ENCODE measurements at regions of chr5 and their contacts with region 1.

Region 1: GRCh38 chr5:77129391-77129990 is 42.4 kb upstream of the ZBED3 start:
- DNase-seq: peak in 1 of 2 experiments; percentile 31
- H3K4me3 ChIP-seq: no peak overlapping the region
- H3K27ac ChIP-seq: no peak overlapping the region
- H3K4me1 ChIP-seq: peaks cover 7% of the 10 kb centered on the region; the same call in 1 of the 2 replicates
- H3K27me3 ChIP-seq: no peaks in the 10 kb centered on the region
- CTCF ChIP-seq: peak; percentile 46; the same call in 1 of the 2 replicates

Region 2: DNA sequence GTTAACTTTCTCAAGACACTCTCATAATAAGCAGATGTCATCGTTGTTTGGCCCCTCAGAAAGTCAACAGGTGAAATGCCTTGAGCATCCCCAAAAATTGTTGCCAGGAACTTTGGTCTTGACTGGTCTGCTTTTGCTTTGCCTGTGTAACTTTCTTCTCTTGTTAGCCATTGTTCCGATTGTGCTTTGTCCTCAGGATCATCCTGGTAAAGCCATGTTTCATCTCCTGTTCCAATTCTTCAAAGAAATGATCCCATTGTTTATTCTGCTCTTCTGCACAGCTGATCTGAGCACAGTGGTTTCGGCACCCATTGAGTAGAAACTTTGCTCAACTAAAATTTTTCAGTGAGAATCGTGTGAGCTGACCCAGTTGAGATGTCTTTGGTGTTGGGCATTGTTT is 34.3 kb before region 1 on chr5:
- CTCF ChIA-PET with region 1: no interaction called
- POLR2A ChIA-PET with region 1: no interaction called
- intact Hi-C with region 1: loop called (anchors 1 kb)
- DNase-seq: no peak
- H3K4me3 ChIP-seq: no peak overlapping the region
- H3K27ac ChIP-seq: no peak overlapping the region
- H3K4me1 ChIP-seq: no peaks in the 10 kb centered on the region
- H3K27me3 ChIP-seq: no peaks in the 10 kb centered on the region
- CTCF ChIP-seq: no peak

Region 3: DNA sequence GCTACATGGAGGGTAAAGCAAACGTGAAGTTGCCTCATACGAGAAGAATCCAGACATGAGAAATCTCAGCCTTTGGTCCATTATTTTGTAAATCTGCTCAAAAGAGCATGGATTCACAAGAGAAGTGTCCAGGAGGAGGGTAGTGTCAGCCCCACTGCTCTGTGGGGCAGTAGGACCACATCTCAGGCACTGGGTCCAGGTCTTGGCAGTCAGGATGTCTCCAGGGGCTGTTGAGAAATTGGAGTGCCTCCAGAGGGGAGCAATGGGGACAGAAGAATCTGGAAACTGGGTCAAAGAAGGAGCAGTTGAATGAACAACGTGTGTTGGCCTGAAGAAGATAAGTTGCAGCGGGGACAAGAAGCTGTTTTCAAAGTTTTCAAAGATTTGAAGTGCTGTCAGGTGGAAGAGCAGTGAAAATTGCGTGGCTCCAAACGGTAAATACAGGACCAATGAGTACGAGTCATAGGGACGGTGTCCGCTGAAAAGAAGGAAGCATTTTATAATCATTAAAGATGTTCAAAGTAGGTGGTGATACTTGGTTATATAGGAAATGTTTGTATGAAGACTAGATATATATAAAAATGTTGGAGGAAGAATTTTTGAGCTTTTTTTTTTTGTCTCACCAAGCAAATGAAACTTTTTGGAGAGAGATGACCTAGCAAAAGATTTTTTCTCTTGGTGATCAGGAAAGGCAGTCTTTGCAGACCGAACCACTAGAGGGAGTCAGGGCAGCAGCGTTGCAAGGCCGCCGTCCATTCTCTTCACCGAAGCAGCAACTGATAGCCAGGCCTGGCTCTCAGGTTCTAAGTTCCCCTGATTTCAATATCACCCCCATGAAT is 14.7 kb after region 1 on chr5:
- CTCF ChIA-PET with region 1: no interaction called
- POLR2A ChIA-PET with region 1: no interaction called
- intact Hi-C with region 1: no loop called
- DNase-seq: peak; percentile 39 to 56
- H3K4me3 ChIP-seq: no peak overlapping the region
- H3K27ac ChIP-seq: no peak overlapping the region
- H3K4me1 ChIP-seq: no peaks in the 10 kb centered on the region
- H3K27me3 ChIP-seq: no peaks in the 10 kb centered on the region
- CTCF ChIP-seq: peak; percentile 86